ENCODE measurements at regions of chr17 and their contacts with region 1.

Region 1: DNA sequence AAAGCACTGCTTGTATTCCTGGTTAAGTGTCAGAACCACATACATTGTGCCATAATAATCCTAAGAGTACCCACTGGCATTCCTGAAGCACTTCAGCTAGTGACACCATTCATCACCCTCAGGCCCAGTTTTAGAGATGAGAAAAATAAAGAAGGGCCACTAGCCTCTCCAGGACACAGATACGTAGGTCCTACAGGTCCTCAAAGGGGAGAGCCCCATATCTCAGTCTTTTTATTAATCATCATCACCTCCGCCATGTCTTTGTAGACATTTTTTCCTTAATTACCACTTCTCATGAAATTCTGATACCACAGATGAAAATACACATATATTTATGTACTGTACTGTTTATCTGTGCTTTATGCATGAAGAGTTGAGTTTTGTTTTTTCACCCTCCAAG is 43.5 kb downstream of the GRB2 start:
- DNase-seq: no peak
- H3K4me3 ChIP-seq: no peak overlapping the region
- H3K4me3 Mint-ChIP-seq: no peak overlapping the region
- H3K27ac ChIP-seq: peak overlapping the region in 1 of 2 donors; percentile 60
- H3K27ac Mint-ChIP-seq: peak overlapping the region in 4 of 7 donors; percentile 50 to 67 (median 52)
- H3K4me1 ChIP-seq: peaks cover 17 to 41% of the 10 kb centered on the region in 2 donors
- H3K4me1 Mint-ChIP-seq: peaks cover 74% of the 10 kb centered on the region
- H3K27me3 ChIP-seq: no peaks in the 10 kb centered on the region
- H3K27me3 Mint-ChIP-seq: no peaks in the 10 kb centered on the region
- CTCF ChIP-seq: no peak

Region 2: DNA sequence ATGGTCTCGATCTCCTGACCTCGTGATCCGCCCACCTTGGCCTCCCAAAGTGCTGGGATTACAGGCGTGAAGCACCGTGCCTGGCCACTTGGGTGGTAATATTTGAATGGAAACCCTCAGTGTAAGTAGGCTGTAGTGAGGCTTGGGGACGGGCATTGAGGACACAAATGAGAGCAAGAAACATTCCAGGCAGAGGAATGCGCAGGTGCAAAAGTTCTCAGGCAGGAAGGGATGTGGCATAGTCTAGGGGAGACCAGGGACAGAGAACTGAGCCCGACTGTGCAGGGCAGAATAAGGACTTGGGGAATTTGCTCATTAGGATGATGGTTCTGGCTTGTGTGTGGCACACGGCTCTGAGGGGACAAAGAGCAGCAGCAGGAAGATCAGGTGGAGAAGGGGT is 11.3 kb before region 1 on chr17:
- intact Hi-C with region 1: loop called in 1 of 2 experiments (anchors 1 kb)
- DNase-seq: no peak
- H3K4me3 ChIP-seq: no peak overlapping the region
- H3K4me3 Mint-ChIP-seq: no peak overlapping the region
- H3K27ac ChIP-seq: peak overlapping the region in 1 of 2 donors; percentile 87
- H3K27ac Mint-ChIP-seq: peak overlapping the region in 5 of 7 donors; percentile 15 to 89 (median 54)
- H3K4me1 ChIP-seq: peaks cover 66 to 73% of the 10 kb centered on the region in 2 donors
- H3K4me1 Mint-ChIP-seq: peaks cover 87% of the 10 kb centered on the region
- H3K27me3 ChIP-seq: no peaks in the 10 kb centered on the region
- H3K27me3 Mint-ChIP-seq: peaks cover 0 to 2% (median 0%) of the 10 kb centered on the region in 3 donors
- CTCF ChIP-seq: no peak